ENCODE measurements at regions of chr22 and their contacts with region 1.

Region 1: GRCh38 chr22:24727218-24727851 is 47.2 kb downstream of the PIWIL3 start:
- DNase-seq: peak; percentile 74
- H3K4me3 ChIP-seq: no peak overlapping the region
- H3K27ac ChIP-seq: no peak overlapping the region
- H3K27me3 ChIP-seq: no peaks in the 10 kb centered on the region
- CTCF ChIP-seq: no peak

Region 2: DNA sequence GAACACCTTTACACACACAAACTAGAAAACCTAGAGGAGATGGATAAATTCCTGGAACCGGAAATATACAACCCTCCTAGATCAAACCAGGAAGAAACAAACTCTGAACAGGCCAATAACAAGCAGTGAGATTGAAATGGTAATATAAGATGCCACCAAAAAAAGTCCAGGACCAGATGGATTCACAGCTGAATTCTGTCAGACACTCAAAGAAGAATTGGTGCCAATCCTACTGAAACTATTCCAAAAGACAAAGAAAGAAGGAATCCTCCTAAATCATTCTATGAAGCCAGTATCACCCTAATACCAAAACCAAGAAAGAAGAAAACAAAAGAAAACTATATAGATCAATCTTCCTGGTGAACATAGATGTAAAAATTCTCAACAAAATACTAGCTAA is 13.3 kb after region 1 on chr22:
- CTCF ChIA-PET with region 1: no interaction called
- POLR2A ChIA-PET with region 1: no interaction called
- DNase-seq: no peak
- H3K4me3 ChIP-seq: no peak overlapping the region
- H3K27ac ChIP-seq: no peak overlapping the region
- H3K27me3 ChIP-seq: peaks cover 14% of the 10 kb centered on the region
- CTCF ChIP-seq: no peak

Region 3: DNA sequence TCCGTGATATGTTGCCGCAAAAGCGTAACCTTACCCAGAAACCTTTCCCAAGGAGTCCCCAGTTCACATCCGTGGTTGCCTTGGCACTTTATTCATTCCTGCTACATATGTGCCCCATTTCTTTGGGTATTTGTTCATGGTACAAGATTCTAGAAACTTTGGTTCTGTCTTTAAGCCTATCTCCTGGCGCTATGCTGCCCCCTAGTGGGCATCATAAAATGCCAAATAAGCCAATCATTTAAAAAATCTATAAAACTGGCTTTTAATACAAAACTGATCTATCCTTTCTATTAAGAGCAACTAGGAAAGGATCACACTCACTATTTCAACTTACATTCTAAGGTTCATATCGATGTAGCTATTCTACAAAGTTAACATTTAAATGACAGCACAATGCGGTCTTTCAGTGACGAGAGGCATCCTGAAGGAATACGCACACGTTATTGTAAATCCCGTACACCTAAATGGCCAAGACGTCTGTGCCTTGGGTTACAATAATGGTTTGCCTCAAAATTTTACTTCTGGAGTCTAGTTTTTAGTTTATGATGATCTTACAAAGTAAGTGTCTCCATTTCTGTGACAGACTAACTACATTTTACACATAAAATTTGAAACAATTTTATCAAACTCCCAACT is 30.9 kb after region 1 on chr22:
- CTCF ChIA-PET with region 1: interaction called, 22 read pairs
- POLR2A ChIA-PET with region 1: no interaction called
- DNase-seq: peak; percentile 37
- H3K4me3 ChIP-seq: no peak overlapping the region
- H3K27ac ChIP-seq: no peak overlapping the region
- H3K27me3 ChIP-seq: peaks cover 8% of the 10 kb centered on the region
- CTCF ChIP-seq: peak; percentile 78

Region 4: DNA sequence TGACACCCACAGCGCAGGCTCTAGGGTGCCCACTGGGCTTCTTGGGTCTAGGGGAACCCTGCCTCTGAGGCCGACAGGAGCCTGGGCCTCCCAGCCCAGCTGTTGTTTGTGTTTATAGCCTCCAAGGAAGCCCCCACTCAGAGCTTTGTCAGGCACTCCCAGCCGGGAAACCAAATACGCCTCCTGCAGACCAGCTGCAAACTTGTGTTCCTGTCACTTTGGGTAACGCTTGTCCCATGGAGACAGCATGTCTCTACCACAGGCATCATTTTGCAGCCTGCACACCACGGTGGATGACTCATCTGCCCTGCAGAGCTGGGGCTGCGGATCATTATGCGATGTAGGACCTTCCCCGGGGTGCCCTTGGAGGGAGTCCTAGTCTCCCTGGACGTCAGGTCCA is 431.7 kb after region 1 on chr22:
- CTCF ChIA-PET with region 1: no interaction called
- POLR2A ChIA-PET with region 1: interaction called, 11 read pairs
- DNase-seq: no peak
- H3K4me3 ChIP-seq: no peak overlapping the region
- H3K27ac ChIP-seq: no peak overlapping the region
- H3K27me3 ChIP-seq: no peaks in the 10 kb centered on the region
- CTCF ChIP-seq: no peak